HepG2 (cell line): ENCODE measurements at regions of chr2 and their contacts with region 1.

Region 1: DNA sequence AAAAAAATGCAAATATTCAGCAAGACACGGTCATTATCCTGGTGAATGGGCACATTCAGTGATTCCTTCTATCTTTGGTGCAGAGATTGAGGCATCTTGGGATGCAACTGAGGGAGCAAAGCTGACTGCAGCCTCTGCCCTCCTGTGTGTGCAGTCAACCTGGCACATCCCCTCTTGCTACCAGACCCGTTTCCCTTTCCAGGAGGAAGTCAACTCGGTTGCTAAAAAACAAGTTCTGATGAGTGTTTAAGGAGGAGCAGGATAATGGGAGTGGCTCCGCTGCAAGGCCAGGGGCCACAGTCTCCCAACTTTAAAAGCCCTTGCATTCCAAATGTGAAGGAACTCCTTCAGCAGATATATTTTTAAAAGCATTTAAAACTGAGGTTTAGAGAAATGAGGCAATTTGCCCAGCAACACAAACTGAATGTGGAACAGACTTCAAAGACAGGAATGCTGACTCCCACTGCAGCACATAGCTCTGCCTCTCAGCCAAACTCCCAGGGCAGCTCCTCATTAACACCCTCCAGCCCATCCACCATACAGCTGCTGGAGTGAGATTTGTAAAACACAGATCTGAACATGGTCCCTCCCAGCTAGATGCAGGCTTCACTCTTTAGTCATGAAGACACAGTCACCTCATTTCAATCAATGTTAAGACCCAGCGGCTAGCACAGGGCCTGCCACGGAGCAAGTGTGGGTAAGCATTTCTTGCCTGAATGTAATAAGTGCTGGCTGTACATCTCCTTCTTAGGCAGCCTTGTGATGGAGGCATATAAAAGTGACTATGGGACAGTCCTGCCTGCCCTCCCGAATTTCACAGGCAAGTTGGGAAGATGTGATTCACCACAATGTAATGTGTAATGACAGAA is 54.3 kb downstream of the VSNL1 start:
- DNase-seq: peak; percentile 29
- ATAC-seq: peak; percentile 8; the same call in 1 of the 3 replicates
- H3K4me3 ChIP-seq: no peak overlapping the region
- H3K27ac ChIP-seq: peak overlapping the region; percentile 50
- H3K4me1 ChIP-seq: peaks cover 62% of the 10 kb centered on the region
- H3K27me3 ChIP-seq: no peaks in the 10 kb centered on the region
- CTCF ChIP-seq: no peak
- EP300 ChIP-seq: no peak
- POLR2A ChIP-seq: no peak
- RAD21 ChIP-seq: no peak

Region 2: GRCh38 chr2:17578466-17578928 is 16.3 kb before region 1 on chr2:
- CTCF ChIA-PET with region 1: no interaction called
- POLR2A ChIA-PET with region 1: interaction called, 8 read pairs
- in situ Hi-C with region 1: no loop called
- intact Hi-C with region 1: loop called (anchors 1 kb)
- DNase-seq: peak; percentile 96
- ATAC-seq: peak; percentile 91
- H3K4me3 ChIP-seq: no peak overlapping the region; a peak in 1 of 6 replicates
- H3K27ac ChIP-seq: peak overlapping the region; percentile 51
- H3K4me1 ChIP-seq: peaks cover 66% of the 10 kb centered on the region
- H3K27me3 ChIP-seq: no peaks in the 10 kb centered on the region
- CTCF ChIP-seq: no peak
- EP300 ChIP-seq: peak in 1 of 2 experiments; percentile 74; a peak in 2 of 4 replicates
- POLR2A ChIP-seq: no peak
- RAD21 ChIP-seq: no peak

Region 3: GRCh38 chr2:17583646-17584045 is 11.1 kb before region 1 on chr2:
- CTCF ChIA-PET with region 1: no interaction called
- POLR2A ChIA-PET with region 1: interaction called, 8 read pairs
- in situ Hi-C with region 1: no loop called
- intact Hi-C with region 1: loop called (anchors 1 kb)
- DNase-seq: no peak
- ATAC-seq: no peak
- H3K4me3 ChIP-seq: no peak overlapping the region
- H3K27ac ChIP-seq: no peak overlapping the region
- H3K4me1 ChIP-seq: peaks cover 70% of the 10 kb centered on the region
- H3K27me3 ChIP-seq: no peaks in the 10 kb centered on the region
- CTCF ChIP-seq: no peak
- EP300 ChIP-seq: no peak
- POLR2A ChIP-seq: no peak
- RAD21 ChIP-seq: no peak

Region 4: DNA sequence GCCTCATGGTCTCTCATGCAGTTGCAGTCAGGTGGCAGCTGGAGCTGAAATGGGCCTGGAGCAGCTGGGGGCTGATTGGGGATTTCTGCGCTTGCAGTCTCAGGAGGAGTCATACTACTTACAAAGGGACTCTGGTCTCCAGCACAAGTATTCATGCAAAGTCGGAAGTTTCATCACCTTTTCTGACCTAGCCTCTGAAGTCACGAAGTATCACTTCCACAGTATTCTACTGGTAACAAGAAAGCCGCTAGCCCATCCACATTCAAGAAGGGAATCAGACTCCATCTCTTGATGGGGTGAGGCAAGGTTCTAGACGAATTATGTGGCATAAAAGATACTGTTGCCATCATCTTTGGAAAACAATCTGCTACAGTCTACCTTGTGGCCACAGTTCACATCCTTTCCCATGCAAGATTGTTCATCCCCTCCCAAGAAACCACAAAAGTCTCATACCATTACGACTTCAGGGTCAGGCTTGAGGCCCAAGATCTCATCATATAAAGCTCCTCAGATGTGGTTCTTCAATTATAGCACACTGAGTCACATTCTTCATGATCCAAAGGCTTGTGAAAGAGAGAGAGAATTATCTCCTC is 63.6 kb after region 1 on chr2:
- CTCF ChIA-PET with region 1: no interaction called
- POLR2A ChIA-PET with region 1: no interaction called
- in situ Hi-C with region 1: no loop called
- intact Hi-C with region 1: loop called (anchors 5 kb)
- DNase-seq: no peak
- ATAC-seq: peak; percentile 11; the same call in 1 of the 3 replicates
- H3K4me3 ChIP-seq: no peak overlapping the region
- H3K27ac ChIP-seq: no peak overlapping the region
- H3K4me1 ChIP-seq: no peaks in the 10 kb centered on the region
- H3K27me3 ChIP-seq: no peaks in the 10 kb centered on the region
- CTCF ChIP-seq: no peak
- EP300 ChIP-seq: no peak
- POLR2A ChIP-seq: no peak
- RAD21 ChIP-seq: no peak